CD8-positive, alpha-beta memory T cell (primary cell): ENCODE measurements at regions of chr1 and their contacts with region 1.

Region 1: DNA sequence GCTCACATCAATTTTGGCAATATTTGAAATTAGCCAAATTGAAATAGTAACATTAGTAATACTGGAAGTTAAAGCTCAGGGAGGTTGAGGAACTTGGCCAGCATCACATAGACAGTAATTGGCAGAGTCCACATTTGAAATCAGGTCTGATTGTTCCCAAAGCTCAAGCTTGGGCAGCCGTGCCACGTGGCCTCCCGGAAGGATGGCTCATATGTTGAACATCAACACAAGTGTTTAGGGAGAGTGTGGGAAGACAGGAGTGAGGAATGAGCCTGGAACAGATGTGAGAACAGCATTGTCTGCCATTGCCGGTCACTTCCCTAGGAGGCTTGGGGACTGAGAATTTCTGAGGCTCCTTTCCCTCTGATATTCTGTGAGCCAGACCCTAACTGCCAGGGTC is 40.2 kb upstream of the RBM15 start:
- DNase-seq: no peak
- H3K4me3 ChIP-seq: no peak overlapping the region
- H3K4me3 Mint-ChIP-seq: no peak overlapping the region
- H3K27ac ChIP-seq: no peak overlapping the region
- H3K27ac Mint-ChIP-seq: peak overlapping the region in 1 of 8 donors; percentile 66
- H3K4me1 ChIP-seq: no peaks in the 10 kb centered on the region
- H3K4me1 Mint-ChIP-seq: no peaks in the 10 kb centered on the region
- H3K27me3 ChIP-seq: no peaks in the 10 kb centered on the region
- H3K27me3 Mint-ChIP-seq: peaks cover 4 to 20% of the 10 kb centered on the region in 2 donors

Region 2: GRCh38 chr1:109947582-109948286 is 351.3 kb before region 1 on chr1:
- CTCF ChIA-PET with region 1: no interaction called
- POLR2A ChIA-PET with region 1: no interaction called
- DNase-seq: no peak
- H3K4me3 ChIP-seq: no peak overlapping the region
- H3K4me3 Mint-ChIP-seq: no peak overlapping the region
- H3K27ac ChIP-seq: no peak overlapping the region
- H3K27ac Mint-ChIP-seq: peak overlapping the region in 1 of 8 donors; percentile 8
- H3K4me1 ChIP-seq: no peaks in the 10 kb centered on the region
- H3K4me1 Mint-ChIP-seq: peaks cover 4 to 6% (median 5%) of the 10 kb centered on the region in 3 donors
- H3K27me3 ChIP-seq: peaks cover 2% of the 10 kb centered on the region
- H3K27me3 Mint-ChIP-seq: peaks cover 0 to 13% of the 10 kb centered on the region in 2 donors

Region 3: DNA sequence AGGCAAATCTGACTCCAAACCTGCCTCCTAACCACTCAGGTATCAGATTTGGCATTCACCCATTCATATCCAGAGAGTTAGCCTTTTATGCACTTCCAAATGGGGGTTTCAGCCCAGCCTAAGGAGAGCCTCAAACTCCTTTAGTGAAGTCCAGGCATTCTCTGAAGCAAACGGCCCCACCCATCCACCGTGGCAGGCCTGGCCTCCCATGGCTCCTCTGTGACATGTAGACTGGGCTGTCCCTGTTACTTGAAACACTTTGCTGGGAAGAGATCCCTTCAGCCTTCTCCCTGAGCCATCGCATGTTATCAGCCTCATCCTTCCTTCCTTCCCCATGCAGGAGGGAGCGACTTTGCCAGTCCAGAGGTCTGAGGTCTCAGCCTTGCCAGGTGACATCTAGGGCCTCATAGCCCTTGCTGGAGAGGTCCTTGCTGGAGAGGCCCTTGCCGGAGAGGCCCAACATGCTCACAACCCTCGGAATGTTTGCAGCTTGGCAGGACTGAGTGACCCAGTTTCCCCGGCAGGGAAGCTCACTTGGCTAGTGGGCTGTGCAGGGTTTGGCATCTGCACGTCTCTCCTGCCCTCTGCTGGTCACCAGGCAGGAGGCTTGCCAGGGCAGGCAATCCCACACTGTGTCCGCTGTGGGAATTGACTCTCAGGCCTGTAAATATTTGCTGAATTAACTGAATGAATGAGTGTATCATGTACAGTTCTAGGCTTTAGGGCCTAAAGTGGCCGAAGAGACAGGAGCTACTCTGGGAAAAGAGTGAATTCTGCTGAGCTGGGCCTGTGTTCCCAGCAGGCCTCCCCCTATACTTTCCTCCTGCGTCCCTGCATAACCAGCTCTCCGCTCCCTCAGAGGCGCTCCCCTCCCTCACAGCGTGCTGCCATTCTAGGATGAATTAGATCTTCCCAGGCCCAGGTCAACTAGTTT is 13.5 kb after region 1 on chr1:
- CTCF ChIA-PET with region 1: interaction called, 11 read pairs
- POLR2A ChIA-PET with region 1: no interaction called
- DNase-seq: peak; percentile 57 to 82 (median 62)
- H3K4me3 ChIP-seq: no peak overlapping the region
- H3K4me3 Mint-ChIP-seq: peak overlapping the region in 1 of 7 donors; percentile 54
- H3K27ac ChIP-seq: no peak overlapping the region
- H3K27ac Mint-ChIP-seq: no peak overlapping the region
- H3K4me1 ChIP-seq: no peaks in the 10 kb centered on the region
- H3K4me1 Mint-ChIP-seq: peaks cover 0 to 2% (median 0%) of the 10 kb centered on the region in 3 donors
- H3K27me3 ChIP-seq: no peaks in the 10 kb centered on the region
- H3K27me3 Mint-ChIP-seq: peaks cover 0 to 2% of the 10 kb centered on the region in 2 donors